Activated T-helper 1 cell treated with anti-CD3 and anti-CD28 coated beads, Interleukin-12 subunit alpha, Interleukin-12 subunit beta, Interleukin-2, Interleukin-4 antibody, amounts not matched to agents 30 ng/mL and 10 ng/mL and 1 ng/mL, durations not matched to agents 14 hours and 24 hours and 36 hours (primary cell): ENCODE measurements at regions of chr9 and their contacts with region 1.

Region 1: GRCh38 chr9:137200311-137201204 is at the start of gene TPRN:
- DNase-seq: peak; percentile 99
- H3K4me3 Mint-ChIP-seq: peak within 1 kb of the TSS; percentile 85
- H3K27ac Mint-ChIP-seq: peak within 1 kb of the TSS; percentile 75
- H3K4me1 Mint-ChIP-seq: peaks cover 23% of the 10 kb centered on the region
- H3K27me3 Mint-ChIP-seq: no peaks in the 10 kb centered on the region
- total RNA-seq, gene TPRN: 15.6 and 17.2 TPM in 2 replicates

Region 2: GRCh38 chr9:137129456-137130175 is 70.9 kb before region 1 on chr9:
- intact Hi-C with region 1: loop called (anchors 1 kb)
- DNase-seq: peak; percentile 91
- H3K4me3 Mint-ChIP-seq: peak overlapping the region; percentile 90
- H3K27ac Mint-ChIP-seq: peak overlapping the region; percentile 79
- H3K4me1 Mint-ChIP-seq: peaks cover 24% of the 10 kb centered on the region
- H3K27me3 Mint-ChIP-seq: peaks cover 5% of the 10 kb centered on the region

Region 3: DNA sequence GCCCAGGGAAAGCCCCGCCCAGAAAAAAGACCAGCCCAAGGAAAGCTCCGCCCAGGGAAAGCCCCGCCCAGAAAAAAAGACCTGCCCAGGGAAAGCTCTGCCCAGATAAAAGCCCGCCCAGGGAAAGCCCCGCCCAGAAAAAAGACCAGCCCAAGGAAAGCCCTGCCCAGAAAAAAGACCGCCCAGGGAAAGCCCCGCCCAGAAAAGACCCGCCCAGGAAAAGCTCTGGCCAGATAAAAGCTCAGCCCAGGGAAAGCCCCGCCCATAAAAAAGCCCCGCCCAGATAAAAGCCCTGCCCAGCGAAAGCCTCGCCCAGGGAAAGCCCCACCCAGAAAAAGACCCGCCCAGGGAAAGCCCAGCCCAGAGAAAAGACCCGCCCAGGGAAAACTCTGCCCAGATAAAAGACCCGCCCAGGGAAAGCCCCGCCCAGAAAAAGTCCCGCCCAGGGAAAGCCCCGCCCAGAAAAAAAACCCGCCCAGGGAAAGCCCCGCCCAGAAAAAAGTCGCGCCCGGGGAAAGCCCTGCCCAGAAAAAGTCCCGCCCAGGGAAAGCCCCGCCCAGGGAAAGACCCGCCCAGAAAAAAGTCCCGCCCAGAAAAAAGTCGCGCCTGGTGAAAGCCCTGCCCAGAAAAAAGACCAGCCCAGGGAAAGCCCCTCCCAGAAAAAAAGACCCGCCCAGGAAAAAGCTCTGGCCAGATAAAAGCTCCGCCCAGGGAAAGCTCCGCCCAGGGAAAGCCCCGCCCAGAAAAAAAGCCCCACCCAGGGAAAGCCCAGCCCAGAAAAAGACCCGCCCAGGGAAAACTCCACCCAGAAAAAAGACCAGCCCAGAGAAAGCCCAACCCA is 49.7 kb before region 1 on chr9:
- intact Hi-C with region 1: loop called (anchors 1 kb)
- DNase-seq: peak; percentile 60
- H3K4me3 Mint-ChIP-seq: no peak overlapping the region
- H3K27ac Mint-ChIP-seq: no peak overlapping the region
- H3K4me1 Mint-ChIP-seq: peaks cover 4% of the 10 kb centered on the region
- H3K27me3 Mint-ChIP-seq: peaks cover 2% of the 10 kb centered on the region

Region 4: GRCh38 chr9:137156567-137157375 is 43.8 kb before region 1 on chr9:
- intact Hi-C with region 1: loop called (anchors 1 kb)
- DNase-seq: peak; percentile 43
- H3K4me3 Mint-ChIP-seq: peak overlapping the region; percentile 21
- H3K27ac Mint-ChIP-seq: no peak overlapping the region
- H3K4me1 Mint-ChIP-seq: no peaks in the 10 kb centered on the region
- H3K27me3 Mint-ChIP-seq: peaks cover 26% of the 10 kb centered on the region

Region 5: DNA sequence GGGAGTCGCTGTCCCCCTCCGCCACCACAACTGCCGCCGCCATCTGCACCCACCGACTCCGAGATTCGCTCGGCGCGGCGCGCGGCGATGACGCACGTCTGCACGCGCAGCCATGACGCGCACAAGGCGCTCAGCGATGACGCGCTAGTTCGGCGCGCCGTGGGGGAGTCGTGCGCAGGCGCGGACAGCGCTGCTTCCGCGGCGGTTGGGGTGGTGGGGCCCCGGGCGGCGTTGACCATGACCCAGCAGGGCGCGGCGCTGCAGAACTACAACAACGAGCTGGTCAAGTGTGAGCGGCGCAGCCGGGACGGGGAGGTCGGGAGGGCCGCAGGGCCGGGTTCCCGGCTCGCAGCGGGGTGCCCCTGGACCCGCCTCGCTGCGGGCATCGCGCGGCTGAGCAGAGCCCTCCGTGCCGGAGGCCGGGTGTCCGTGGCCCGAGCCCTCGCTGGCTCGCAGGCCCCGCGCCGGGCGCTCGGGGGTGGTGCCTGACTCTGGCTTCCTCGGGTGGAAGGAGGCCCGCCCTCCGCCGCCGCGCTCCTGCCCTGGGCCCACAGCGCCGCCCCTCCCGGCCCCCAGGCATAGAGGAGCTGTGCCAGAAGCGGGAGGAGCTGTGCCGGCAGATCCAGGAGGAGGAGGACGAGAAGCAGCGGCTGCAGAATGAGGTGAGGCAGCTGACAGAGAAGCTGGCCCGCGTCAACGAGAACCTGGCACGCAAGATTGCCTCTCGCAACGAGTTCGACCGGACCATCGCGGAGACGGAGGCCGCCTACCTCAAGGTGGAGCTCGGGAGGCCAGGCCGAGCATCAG is 11.9 kb before region 1 on chr9 and contains the starts of genes ANAPC2 and SSNA1:
- intact Hi-C with region 1: loop called (anchors 1 kb)
- DNase-seq: peak; percentile 94
- H3K4me3 Mint-ChIP-seq: peak within 1 kb of the TSS; percentile 97
- H3K27ac Mint-ChIP-seq: peak within 1 kb of the TSS; percentile 87
- H3K4me1 Mint-ChIP-seq: peaks cover 24% of the 10 kb centered on the region
- H3K27me3 Mint-ChIP-seq: peaks cover 4% of the 10 kb centered on the region
- total RNA-seq, gene ANAPC2: 62.5 and 63.6 TPM in 2 replicates
- total RNA-seq, gene SSNA1: 101 and 105 TPM in 2 replicates

Region 6: GRCh38 chr9:137235424-137236237 is 35.1 kb after region 1 on chr9:
- intact Hi-C with region 1: no loop called
- DNase-seq: no peak
- H3K4me3 Mint-ChIP-seq: no peak overlapping the region
- H3K27ac Mint-ChIP-seq: no peak overlapping the region
- H3K4me1 Mint-ChIP-seq: no peaks in the 10 kb centered on the region
- H3K27me3 Mint-ChIP-seq: peaks cover 5% of the 10 kb centered on the region

Region 7: DNA sequence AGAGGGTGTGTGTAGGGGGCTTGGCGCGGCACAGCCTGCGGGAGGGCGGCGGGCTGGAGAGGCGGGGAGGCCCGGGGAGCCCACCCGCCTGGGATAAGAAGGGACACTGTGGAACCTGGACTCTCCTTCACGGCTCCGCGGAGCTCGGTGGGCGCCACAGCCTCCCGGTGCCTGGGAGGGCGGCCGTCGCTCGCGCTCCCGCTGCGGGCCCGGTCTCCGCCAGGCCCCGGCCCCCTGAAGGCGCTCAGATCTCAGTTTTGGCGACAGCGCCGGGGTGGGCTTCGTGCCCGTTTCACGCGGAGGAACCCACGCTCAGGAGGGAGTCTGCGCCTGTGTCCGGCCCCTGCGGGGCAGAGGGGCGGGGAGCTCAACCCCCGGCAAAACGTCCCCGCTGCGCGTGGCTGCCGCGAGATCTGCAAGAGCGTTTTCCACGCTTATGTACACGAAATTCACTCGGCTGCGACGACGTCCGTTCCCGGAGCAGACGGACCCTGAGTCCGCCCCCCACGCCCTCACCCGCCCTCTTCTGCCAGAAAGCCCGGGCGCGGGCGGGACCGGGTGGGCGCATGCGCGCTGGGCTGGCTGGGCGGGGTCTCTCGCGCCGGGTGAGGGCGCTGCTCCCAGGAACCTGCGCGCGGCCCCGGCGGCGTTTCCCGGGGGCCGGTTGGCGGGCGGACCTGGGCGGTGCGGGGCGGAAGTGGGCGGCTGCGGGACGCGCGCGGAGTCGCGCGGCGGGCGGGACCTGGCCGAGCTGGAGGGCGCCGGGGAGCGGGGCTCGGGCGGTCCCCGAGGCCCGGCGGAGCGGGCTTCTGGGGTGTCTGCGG is 54.3 kb after region 1 on chr9 and contains the start of gene NELFB:
- intact Hi-C with region 1: loop called (anchors 1 kb)
- DNase-seq: peak; percentile 97
- H3K4me3 Mint-ChIP-seq: peak within 1 kb of the TSS; percentile 90
- H3K27ac Mint-ChIP-seq: peak within 1 kb of the TSS; percentile 87
- H3K4me1 Mint-ChIP-seq: peaks cover 5% of the 10 kb centered on the region
- H3K27me3 Mint-ChIP-seq: peaks cover 2% of the 10 kb centered on the region
- total RNA-seq, gene NELFB: 70.8 and 72.1 TPM in 2 replicates

Region 8: GRCh38 chr9:137531099-137531765 is 330.7 kb after region 1 on chr9:
- intact Hi-C with region 1: no loop called
- DNase-seq: no peak
- H3K4me3 Mint-ChIP-seq: no peak overlapping the region
- H3K27ac Mint-ChIP-seq: no peak overlapping the region
- H3K4me1 Mint-ChIP-seq: peaks cover 30% of the 10 kb centered on the region
- H3K27me3 Mint-ChIP-seq: peaks cover 4% of the 10 kb centered on the region